ENCODE measurements at regions of chr12 and their contacts with region 1.

Region 1: GRCh38 chr12:8078398-8078797 is 3.7 kb upstream of the NECAP1 start:
- DNase-seq: peak; percentile 87
- ATAC-seq: peak; percentile 64
- H3K4me3 ChIP-seq: no peak overlapping the region
- H3K27ac ChIP-seq: no peak overlapping the region
- H3K4me1 ChIP-seq: peaks cover 4% of the 10 kb centered on the region
- H3K27me3 ChIP-seq: no peaks in the 10 kb centered on the region
- CTCF ChIP-seq: peak; percentile 77
- POLR2A ChIP-seq: no peak
- RAD21 ChIP-seq: peak; percentile 84

Region 2: GRCh38 chr12:7512553-7512952 is 565.8 kb before region 1 on chr12:
- CTCF ChIA-PET with region 1: no interaction called
- POLR2A ChIA-PET with region 1: no interaction called
- dilution Hi-C with region 1: no loop called
- in situ Hi-C with region 1: no loop called
- intact Hi-C with region 1: no loop called
- DNase-seq: peak; percentile 69
- ATAC-seq: no peak; the same call in 1 of the 2 replicates
- H3K4me3 ChIP-seq: no peak overlapping the region
- H3K27ac ChIP-seq: no peak overlapping the region
- H3K4me1 ChIP-seq: no peaks in the 10 kb centered on the region
- H3K27me3 ChIP-seq: no peaks in the 10 kb centered on the region
- CTCF ChIP-seq: no peak
- POLR2A ChIP-seq: no peak
- RAD21 ChIP-seq: no peak

Region 3: DNA sequence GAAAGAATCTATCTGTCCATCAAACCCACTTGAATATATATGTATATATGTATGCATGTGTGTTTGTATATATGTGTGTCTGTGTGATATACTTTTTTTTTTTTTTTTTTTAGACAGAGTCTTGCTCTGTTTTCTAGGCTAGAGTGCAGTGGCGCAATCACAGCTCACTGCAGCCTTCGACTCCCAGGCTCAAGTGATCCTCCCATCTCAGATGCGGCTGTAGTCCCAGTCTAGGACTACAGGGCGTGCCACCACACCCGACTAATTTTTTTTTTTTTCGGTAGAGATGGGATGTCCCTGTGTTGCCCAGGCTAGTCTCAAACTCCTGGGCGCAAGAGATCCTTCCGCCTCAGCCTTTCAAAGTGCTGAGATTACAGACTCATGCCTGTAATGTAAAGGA is 399.7 kb before region 1 on chr12:
- CTCF ChIA-PET with region 1: no interaction called
- POLR2A ChIA-PET with region 1: no interaction called
- dilution Hi-C with region 1: no loop called
- in situ Hi-C with region 1: no loop called
- intact Hi-C with region 1: no loop called
- DNase-seq: no peak
- ATAC-seq: no peak
- H3K4me3 ChIP-seq: no peak overlapping the region
- H3K27ac ChIP-seq: no peak overlapping the region
- H3K4me1 ChIP-seq: no peaks in the 10 kb centered on the region
- H3K27me3 ChIP-seq: no peaks in the 10 kb centered on the region
- CTCF ChIP-seq: no peak
- POLR2A ChIP-seq: no peak
- RAD21 ChIP-seq: no peak

Region 4: GRCh38 chr12:7832059-7832696 is 246.2 kb before region 1 on chr12:
- CTCF ChIA-PET with region 1: interaction called, 4 read pairs
- POLR2A ChIA-PET with region 1: no interaction called
- dilution Hi-C with region 1: no loop called
- in situ Hi-C with region 1: no loop called
- intact Hi-C with region 1: loop called (anchors 2 kb)
- DNase-seq: peak; percentile 71
- ATAC-seq: peak; percentile 97
- H3K4me3 ChIP-seq: no peak overlapping the region
- H3K27ac ChIP-seq: no peak overlapping the region
- H3K4me1 ChIP-seq: no peaks in the 10 kb centered on the region
- H3K27me3 ChIP-seq: peaks cover 1% of the 10 kb centered on the region; the same call in 1 of the 2 replicates
- CTCF ChIP-seq: peak; percentile 71
- POLR2A ChIP-seq: no peak
- RAD21 ChIP-seq: peak; percentile 77

Region 5: DNA sequence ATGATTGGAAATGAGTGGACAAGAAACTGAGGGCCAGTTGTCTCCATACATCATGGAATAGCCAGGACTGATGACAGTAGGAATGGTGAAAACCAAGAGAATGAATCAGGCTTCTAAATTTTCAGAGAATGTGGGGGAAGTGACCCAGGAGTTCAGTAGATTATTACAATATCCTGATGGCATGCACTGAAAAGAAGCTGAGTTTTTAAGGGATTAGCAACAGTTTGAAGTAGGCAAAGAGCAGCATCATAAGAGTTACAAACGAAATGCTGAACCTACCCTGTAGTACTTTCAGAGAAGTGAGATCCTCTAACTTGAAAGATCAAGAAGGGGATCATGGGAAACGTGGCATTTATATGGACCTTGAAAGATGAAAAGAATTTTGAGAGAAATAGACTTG is 218.8 kb before region 1 on chr12:
- CTCF ChIA-PET with region 1: interaction called, 5 read pairs
- POLR2A ChIA-PET with region 1: no interaction called
- dilution Hi-C with region 1: no loop called
- in situ Hi-C with region 1: no loop called
- intact Hi-C with region 1: loop called (anchors 5 kb)
- DNase-seq: peak; percentile 81
- ATAC-seq: peak; percentile 58
- H3K4me3 ChIP-seq: no peak overlapping the region
- H3K27ac ChIP-seq: peak overlapping the region; percentile 43
- H3K4me1 ChIP-seq: peaks cover 3% of the 10 kb centered on the region
- H3K27me3 ChIP-seq: no peaks in the 10 kb centered on the region
- CTCF ChIP-seq: no peak
- POLR2A ChIP-seq: no peak
- RAD21 ChIP-seq: no peak

Region 6: GRCh38 chr12:8040791-8041190 is 37.6 kb before region 1 on chr12:
- CTCF ChIA-PET with region 1: interaction called, 30 read pairs
- POLR2A ChIA-PET with region 1: no interaction called
- dilution Hi-C with region 1: no loop called
- in situ Hi-C with region 1: loop called (anchors 5 kb)
- intact Hi-C with region 1: no loop called
- DNase-seq: no peak
- ATAC-seq: no peak
- H3K4me3 ChIP-seq: no peak overlapping the region
- H3K27ac ChIP-seq: no peak overlapping the region
- H3K4me1 ChIP-seq: peaks cover 8% of the 10 kb centered on the region
- H3K27me3 ChIP-seq: no peaks in the 10 kb centered on the region
- CTCF ChIP-seq: no peak
- POLR2A ChIP-seq: no peak
- RAD21 ChIP-seq: no peak

Region 7: GRCh38 chr12:8045952-8046944 is 32.1 kb before region 1 on chr12:
- CTCF ChIA-PET with region 1: interaction called, 30 read pairs
- POLR2A ChIA-PET with region 1: no interaction called
- dilution Hi-C with region 1: no loop called
- in situ Hi-C with region 1: loop called (anchors 5 kb)
- intact Hi-C with region 1: loop called (anchors 1 kb)
- DNase-seq: peak; percentile 87
- ATAC-seq: peak; percentile 98
- H3K4me3 ChIP-seq: no peak overlapping the region
- H3K27ac ChIP-seq: no peak overlapping the region
- H3K4me1 ChIP-seq: no peaks in the 10 kb centered on the region
- H3K27me3 ChIP-seq: no peaks in the 10 kb centered on the region
- CTCF ChIP-seq: peak; percentile 84
- POLR2A ChIP-seq: no peak
- RAD21 ChIP-seq: peak; percentile 79